ENCODE measurements at regions of chr4 and their contacts with region 1.

Region 1: DNA sequence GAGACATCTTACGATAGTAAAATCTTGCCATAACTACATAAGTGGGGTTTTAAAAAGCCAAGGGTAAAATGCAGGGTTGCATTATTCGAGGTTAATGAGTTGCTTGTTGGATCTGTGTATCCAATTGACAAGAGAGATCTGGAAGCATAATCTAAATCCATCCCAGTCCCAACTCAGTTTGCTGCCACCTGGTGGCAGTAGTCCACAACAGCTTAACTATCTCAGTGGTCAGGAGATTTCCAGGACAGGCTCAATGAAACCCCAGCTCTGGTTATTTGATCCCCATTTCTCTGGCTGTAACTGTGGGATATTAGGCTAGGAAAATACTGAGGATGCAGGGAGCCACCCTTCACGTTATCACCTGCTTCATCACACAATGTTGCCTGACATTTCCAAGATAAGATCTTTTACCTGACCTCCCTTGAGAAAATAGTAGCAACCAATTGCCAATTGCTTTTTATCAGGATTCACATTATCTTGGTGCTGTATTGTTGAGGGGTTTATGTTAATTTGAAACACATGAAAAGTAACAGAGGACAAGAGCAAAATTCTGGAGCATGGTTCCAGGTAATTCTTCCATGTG is 88.2 kb upstream of the TNIP3 start:
- DNase-seq: peak in 4 of 5 donors; percentile 32 to 71 (median 44)
- ATAC-seq: peak in 3 of 4 donors; percentile 62 to 79 (median 78)
- H3K4me3 ChIP-seq: no peak overlapping the region
- H3K27ac ChIP-seq: no peak overlapping the region
- H3K4me1 ChIP-seq: peaks cover 0 to 15% (median 0%) of the 10 kb centered on the region in 12 donors
- H3K27me3 ChIP-seq: no peaks in the 10 kb centered on the region
- CTCF ChIP-seq: peak; percentile 63 to 85 (median 80)
- POLR2A ChIP-seq: no peak

Region 2: GRCh38 chr4:120071192-120071795 is 1181.0 kb before region 1 on chr4:
- intact Hi-C with region 1: loop called in 1 of 10 experiments (anchors 5 kb)
- DNase-seq: peak in 1 of 5 donors; percentile 37
- ATAC-seq: no peak
- H3K4me3 ChIP-seq: no peak overlapping the region
- H3K27ac ChIP-seq: no peak overlapping the region
- H3K4me1 ChIP-seq: peaks cover 0 to 28% (median 9%) of the 10 kb centered on the region in 12 donors
- H3K27me3 ChIP-seq: no peaks in the 10 kb centered on the region
- CTCF ChIP-seq: peak; percentile 50 to 78 (median 62)
- POLR2A ChIP-seq: no peak

Region 3: GRCh38 chr4:121421594-121421993 is 169.3 kb after region 1 on chr4:
- intact Hi-C with region 1: loop called in 1 of 10 experiments (anchors 10 kb)
- DNase-seq: no peak
- ATAC-seq: no peak
- H3K4me3 ChIP-seq: peak overlapping the region in 9 of 12 donors; percentile 20 to 46 (median 33)
- H3K27ac ChIP-seq: peak overlapping the region in 1 of 12 donors; percentile 40
- H3K4me1 ChIP-seq: no peaks in the 10 kb centered on the region
- H3K27me3 ChIP-seq: no peaks in the 10 kb centered on the region
- CTCF ChIP-seq: peak in 11 of 12 donors; percentile 31 to 59 (median 51)
- POLR2A ChIP-seq: no peak